ENCODE measurements at regions of chr1 and their contacts with region 1.

Region 1: DNA sequence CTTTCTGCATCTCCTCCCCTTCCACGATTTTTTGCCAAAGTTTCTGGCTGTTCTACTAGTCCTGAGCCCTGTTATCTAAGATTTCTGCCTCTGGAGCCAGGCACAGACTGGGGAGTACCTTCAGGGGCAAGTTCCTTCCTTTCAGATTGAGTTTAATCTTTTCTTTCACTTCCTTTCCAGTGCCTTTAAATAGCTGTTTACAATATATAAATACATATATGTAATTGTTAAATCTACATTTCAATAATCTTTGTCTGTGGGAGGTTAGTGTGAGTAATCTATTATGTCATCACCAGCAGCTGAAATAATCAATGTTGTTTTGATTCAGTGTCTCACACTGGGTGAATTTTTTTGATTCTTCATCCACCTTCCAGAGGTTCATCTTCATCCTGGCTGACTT is 31.8 kb downstream of the DIPK1A start:
- DNase-seq: peak; percentile 18
- CTCF ChIP-seq: no peak

Region 2: GRCh38 chr1:92943502-92943847 is 14.0 kb after region 1 on chr1:
- CTCF ChIA-PET with region 1: interaction called, 14 read pairs
- POLR2A ChIA-PET with region 1: no interaction called
- DNase-seq: no peak
- CTCF ChIP-seq: no peak

Region 3: DNA sequence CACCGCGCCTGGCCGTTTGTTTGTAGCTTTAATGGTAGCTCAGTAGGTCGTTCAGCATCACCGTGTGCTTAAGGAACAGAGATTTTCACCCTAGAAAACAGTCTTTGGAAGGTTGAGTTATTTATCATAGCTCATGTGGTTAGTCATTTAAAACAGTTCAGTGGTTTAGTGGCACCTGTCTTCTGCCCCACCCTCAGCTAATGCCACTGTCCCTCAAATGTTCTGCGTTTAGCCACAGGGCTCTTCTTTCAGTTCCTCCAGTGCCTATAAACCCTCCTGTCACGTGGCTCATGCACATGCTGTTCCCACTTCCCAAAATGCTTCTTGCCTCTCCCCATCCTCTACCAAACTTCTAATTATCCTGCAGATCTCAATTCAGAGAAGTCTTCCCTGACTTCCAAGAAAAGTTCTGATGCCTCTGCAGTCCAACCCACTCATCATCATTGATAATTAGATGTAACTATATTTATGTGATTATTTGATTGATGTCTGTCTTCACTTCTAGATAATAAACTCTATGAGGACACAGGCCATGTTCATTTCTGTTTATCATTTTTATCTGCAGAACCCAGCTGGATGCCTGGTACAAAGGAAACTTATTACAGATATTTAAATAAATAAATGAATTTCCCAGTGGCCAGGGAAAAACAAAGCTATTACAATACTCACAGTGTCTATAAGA is 46.2 kb after region 1 on chr1:
- CTCF ChIA-PET with region 1: no interaction called
- POLR2A ChIA-PET with region 1: no interaction called
- DNase-seq: peak; percentile 58
- CTCF ChIP-seq: no peak

Region 4: GRCh38 chr1:93081716-93082115 is 152.3 kb after region 1 on chr1:
- CTCF ChIA-PET with region 1: no interaction called
- POLR2A ChIA-PET with region 1: no interaction called
- DNase-seq: no peak
- CTCF ChIP-seq: no peak

Measured in GM10248 (cell line).